Endothelial cell of umbilical vein (primary cell): ENCODE measurements at regions of chr2 and their contacts with region 1.

Region 1: GRCh38 chr2:234288974-234289455 is 207.9 kb downstream of the ARL4C start:
- DNase-seq: peak; percentile 65
- H3K4me3 ChIP-seq: no peak overlapping the region
- H3K27ac ChIP-seq: no peak overlapping the region
- H3K4me1 ChIP-seq: peaks cover 37% of the 10 kb centered on the region
- H3K27me3 ChIP-seq: no peaks in the 10 kb centered on the region
- CTCF ChIP-seq: peak; percentile 75 to 88
- POLR2A ChIP-seq: no peak

Region 2: GRCh38 chr2:233976690-233977294 is 312.2 kb before region 1 on chr2:
- CTCF ChIA-PET with region 1: interaction called, 3 read pairs
- POLR2A ChIA-PET with region 1: no interaction called
- dilution Hi-C with region 1: no loop called
- intact Hi-C with region 1: loop called (anchors 1 kb)
- DNase-seq: peak; percentile 57
- H3K4me3 ChIP-seq: no peak overlapping the region
- H3K27ac ChIP-seq: no peak overlapping the region
- H3K4me1 ChIP-seq: peaks cover 13% of the 10 kb centered on the region
- H3K27me3 ChIP-seq: peaks cover 0 to 3% of the 10 kb centered on the region in 2 experiments
- CTCF ChIP-seq: peak; percentile 4 to 22
- POLR2A ChIP-seq: no peak

Region 3: DNA sequence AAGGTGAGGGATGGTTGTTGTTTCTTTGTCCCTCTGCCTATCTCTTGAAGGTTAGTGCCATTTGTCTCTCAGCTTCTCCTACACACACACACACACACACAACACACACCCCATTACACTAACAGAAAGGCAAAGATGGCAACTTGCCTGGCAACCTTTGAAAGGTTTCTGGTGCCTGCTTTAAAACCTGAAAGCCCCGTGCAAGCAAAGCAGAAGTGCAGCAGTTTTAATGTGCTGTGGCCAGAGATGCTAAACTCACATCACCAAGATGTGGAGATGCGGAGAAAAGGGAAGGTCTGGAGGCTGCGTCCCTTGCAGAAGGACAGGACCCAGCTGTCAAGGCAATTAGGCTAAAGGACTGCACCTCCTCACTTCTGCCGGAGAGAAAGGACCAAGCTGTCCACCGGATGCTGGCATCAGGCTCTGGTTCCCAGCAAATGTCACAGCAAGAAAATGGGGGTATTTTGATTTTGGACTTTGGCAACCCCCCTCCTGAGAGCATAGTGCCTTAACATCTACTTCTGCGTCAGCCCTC is 11.4 kb after region 1 on chr2:
- CTCF ChIA-PET with region 1: interaction called, 18 read pairs
- POLR2A ChIA-PET with region 1: no interaction called
- dilution Hi-C with region 1: no loop called
- intact Hi-C with region 1: no loop called
- DNase-seq: no peak
- H3K4me3 ChIP-seq: no peak overlapping the region
- H3K27ac ChIP-seq: no peak overlapping the region
- H3K4me1 ChIP-seq: no peaks in the 10 kb centered on the region
- H3K27me3 ChIP-seq: peaks cover 4 to 7% of the 10 kb centered on the region in 2 experiments
- CTCF ChIP-seq: no peak
- POLR2A ChIP-seq: no peak

Region 4: DNA sequence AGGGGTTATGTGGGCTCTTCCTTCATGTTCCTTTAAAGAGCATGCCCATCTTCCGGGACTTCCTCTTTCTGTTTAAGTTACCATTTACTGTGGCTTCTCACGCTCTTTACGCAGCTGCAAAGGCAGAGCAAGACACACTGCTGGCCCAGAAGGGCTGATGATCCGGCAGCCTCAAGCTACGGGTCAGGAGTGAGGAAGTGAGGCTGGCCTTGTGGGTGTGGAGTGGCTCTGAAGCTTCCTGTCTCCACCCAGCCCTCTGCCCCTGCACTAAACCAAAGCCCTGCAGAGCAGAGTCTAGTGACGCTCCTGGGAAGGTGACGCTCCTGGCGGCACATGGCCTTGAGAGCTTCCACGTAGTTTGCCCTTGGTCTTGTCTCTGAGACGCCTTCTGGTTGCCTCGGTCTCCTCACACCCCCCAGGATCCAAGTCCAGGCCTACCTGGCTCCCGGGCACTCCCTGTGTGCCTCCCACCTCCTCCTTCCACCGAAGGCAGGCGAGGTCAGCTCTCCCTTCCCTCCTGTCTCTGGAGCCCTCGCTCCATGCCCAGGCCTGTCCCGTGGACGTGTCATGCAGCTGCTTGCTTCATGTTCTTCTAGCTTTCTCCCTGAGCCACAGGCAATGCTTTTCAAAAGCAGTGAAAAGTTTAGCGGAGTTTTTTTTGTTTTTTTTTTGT is 157.5 kb after region 1 on chr2:
- CTCF ChIA-PET with region 1: interaction called, 5 read pairs
- POLR2A ChIA-PET with region 1: no interaction called
- dilution Hi-C with region 1: no loop called
- intact Hi-C with region 1: loop called (anchors 2 kb)
- DNase-seq: peak; percentile 52
- H3K4me3 ChIP-seq: no peak overlapping the region
- H3K27ac ChIP-seq: peak overlapping the region; percentile 2
- H3K4me1 ChIP-seq: peaks cover 26% of the 10 kb centered on the region
- H3K27me3 ChIP-seq: no peaks in the 10 kb centered on the region
- CTCF ChIP-seq: no peak
- POLR2A ChIP-seq: no peak

Region 5: DNA sequence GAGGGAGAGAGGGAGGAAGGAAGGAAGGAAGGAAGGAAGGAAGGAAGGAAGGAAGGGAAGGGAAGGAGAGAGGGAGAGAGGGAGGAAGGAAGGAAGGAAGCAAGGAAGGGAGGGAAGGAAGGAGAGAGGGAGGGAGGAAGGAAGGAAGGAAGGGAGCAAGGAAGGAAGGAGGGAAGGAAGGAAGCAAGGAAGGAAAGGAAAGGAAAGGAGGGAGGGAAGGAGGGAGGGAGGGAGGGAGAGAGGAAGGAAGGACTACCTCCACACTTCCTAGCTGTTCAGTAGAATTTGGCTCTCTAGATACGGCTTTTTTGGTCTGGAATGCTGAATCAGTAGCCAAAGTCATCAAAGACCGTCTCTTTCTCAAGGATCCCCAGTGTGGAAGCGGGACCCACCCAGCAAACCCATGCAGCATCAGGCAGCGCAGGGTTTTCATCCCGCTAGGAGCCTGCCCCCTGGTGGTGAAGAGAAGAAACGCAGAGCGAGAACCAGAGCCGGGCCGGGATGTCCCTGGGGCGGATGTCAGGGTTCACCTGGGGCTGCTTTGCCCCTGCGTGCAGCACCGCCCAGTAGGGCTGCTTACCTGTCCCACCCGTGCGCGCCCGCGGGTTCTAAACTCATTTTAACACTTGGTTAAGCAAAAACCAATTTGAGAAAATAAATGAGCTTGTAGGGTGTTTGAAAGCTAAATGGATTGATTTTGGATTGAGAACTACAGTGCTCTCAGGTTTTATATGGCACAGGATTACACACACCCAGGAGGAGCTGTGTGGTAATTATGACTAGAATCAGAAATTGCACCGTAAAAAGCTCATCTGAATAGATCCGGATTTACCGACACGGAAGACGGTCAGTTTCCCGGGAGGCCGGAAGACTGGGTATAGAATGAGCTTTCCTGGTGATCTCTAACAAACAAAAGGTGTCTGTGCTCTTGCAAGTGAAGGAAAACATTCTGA is 255.9 kb after region 1 on chr2:
- CTCF ChIA-PET with region 1: interaction called, 58 read pairs
- POLR2A ChIA-PET with region 1: no interaction called
- dilution Hi-C with region 1: no loop called
- intact Hi-C with region 1: loop called (anchors 1 kb)
- DNase-seq: peak; percentile 38
- H3K4me3 ChIP-seq: no peak overlapping the region
- H3K27ac ChIP-seq: no peak overlapping the region
- H3K4me1 ChIP-seq: peaks cover 6% of the 10 kb centered on the region
- H3K27me3 ChIP-seq: peaks cover 0 to 6% of the 10 kb centered on the region in 2 experiments
- CTCF ChIP-seq: peak; percentile 71 to 96
- POLR2A ChIP-seq: no peak